Ovary (tissue), 10 donors: ENCODE measurements at regions of chr12 and their contacts with region 1.

Region 1: DNA sequence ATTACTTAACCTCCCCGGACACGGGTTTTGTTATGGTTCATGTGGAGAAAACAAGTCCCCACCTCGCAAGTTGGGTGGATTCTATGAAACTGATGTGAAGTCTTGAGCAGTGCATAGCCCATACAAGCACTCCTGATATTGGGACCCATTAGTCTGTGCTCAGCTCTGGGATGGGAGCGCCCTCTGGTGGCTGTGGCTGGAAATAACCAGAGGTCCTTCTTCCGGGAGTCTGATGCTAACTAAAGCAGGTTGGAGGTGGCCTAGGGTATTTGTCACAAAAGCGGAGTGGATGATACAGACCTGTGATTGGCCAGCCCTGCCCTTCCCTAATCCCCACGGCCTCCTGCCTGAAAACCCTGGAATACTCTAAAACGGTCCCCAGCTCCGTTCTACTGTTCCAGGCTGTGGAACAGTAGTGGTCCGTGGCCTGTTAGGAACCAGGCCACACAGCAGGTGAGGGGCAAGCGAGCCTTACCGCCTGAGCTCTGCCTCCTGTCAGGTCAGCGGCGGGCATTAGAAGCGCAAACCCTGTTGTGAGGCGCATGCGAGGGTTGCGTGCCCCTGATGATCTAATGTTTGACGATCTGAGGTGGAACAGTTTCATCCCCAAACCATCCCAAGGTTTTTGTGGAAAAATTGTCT is 6.4 kb downstream of the SLC48A1 start:
- DNase-seq: peak; percentile 84 to 94 (median 93)
- H3K4me3 ChIP-seq: no peak overlapping the region
- H3K27ac ChIP-seq: peak overlapping the region in 1 of 2 donors; percentile 34
- H3K4me1 ChIP-seq: peaks cover 30% of the 10 kb centered on the region
- H3K27me3 ChIP-seq: no peaks in the 10 kb centered on the region
- CTCF ChIP-seq: peak; percentile 95 to 97 (median 96)
- EP300 ChIP-seq: no peak
- POLR2A ChIP-seq: no peak

Region 2: DNA sequence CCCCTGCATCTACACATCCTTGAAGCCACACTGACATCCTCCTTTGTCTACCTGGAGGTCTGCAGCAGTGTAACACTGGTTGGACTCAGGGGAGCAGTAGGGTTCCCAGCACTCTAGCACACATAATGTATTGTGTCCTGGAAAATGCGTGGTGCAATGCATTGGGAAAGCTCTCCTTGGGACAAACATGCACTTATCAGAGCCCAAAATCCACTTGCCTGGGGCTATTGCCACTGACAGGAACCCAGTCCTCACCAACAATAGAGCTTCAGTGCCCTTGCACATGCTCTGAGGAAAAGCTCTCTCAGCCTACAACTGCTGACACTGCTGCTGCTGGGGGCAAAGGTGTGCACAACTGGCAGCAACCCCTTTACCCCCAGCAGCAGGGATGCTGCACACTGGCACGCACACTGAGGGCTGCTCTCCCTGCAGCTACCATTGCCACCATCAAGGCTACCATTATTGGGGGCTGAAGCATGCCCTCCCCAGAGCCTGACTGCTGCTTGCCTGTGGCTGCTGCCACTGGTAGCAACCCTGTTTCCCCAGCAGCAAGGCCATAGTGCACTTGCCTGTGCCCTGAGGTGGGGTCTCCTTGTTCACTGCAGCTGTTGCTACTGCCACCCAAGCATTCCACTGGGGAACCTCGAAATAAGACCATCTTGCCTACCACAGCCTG is 1175.5 kb before region 1 on chr12:
- intact Hi-C with region 1: no loop called
- DNase-seq: no peak
- H3K4me3 ChIP-seq: no peak overlapping the region
- H3K27ac ChIP-seq: no peak overlapping the region
- H3K4me1 ChIP-seq: peaks cover 3% of the 10 kb centered on the region
- H3K27me3 ChIP-seq: no peaks in the 10 kb centered on the region
- CTCF ChIP-seq: no peak
- EP300 ChIP-seq: no peak
- POLR2A ChIP-seq: no peak

Region 3: GRCh38 chr12:47651368-47652254 is 127.8 kb before region 1 on chr12:
- intact Hi-C with region 1: loop called in 2 of 4 experiments (anchors 5 kb)
- DNase-seq: peak; percentile 45 to 64 (median 58)
- H3K4me3 ChIP-seq: no peak overlapping the region
- H3K27ac ChIP-seq: no peak overlapping the region
- H3K4me1 ChIP-seq: peaks cover 1% of the 10 kb centered on the region
- H3K27me3 ChIP-seq: no peaks in the 10 kb centered on the region
- CTCF ChIP-seq: peak; percentile 55 to 78 (median 73)
- EP300 ChIP-seq: no peak
- POLR2A ChIP-seq: no peak

Region 4: DNA sequence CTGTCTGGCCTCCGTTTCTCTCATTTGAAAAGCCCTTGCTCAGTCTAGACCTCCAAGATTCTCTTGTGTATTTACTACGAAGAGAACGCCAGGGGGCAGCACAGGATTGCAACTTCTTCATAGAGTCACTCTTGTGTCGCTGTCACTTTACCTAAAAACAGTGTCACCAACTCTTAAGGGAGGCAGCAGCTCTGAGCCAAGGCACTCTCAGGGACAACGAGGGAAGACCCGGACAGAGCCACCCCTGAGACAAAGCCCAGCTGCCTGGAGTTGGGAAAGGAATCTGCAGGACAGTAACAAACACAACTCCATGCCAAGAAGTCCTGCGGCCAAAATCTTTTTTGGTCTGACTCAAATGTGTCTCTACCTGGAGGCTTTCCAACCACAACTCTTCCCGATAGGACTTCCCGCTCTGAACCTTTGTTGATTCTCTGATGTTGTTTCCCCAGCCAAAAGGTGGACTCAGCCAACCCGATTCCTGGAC is 64.0 kb before region 1 on chr12:
- intact Hi-C with region 1: loop called (anchors 2 to 5 kb)
- DNase-seq: peak; percentile 81 to 92 (median 83)
- H3K4me3 ChIP-seq: no peak overlapping the region
- H3K27ac ChIP-seq: peak overlapping the region; percentile 60 to 84
- H3K4me1 ChIP-seq: peaks cover 39% of the 10 kb centered on the region
- H3K27me3 ChIP-seq: no peaks in the 10 kb centered on the region
- CTCF ChIP-seq: peak; percentile 60 to 97 (median 89)
- EP300 ChIP-seq: no peak
- POLR2A ChIP-seq: no peak

Region 5: DNA sequence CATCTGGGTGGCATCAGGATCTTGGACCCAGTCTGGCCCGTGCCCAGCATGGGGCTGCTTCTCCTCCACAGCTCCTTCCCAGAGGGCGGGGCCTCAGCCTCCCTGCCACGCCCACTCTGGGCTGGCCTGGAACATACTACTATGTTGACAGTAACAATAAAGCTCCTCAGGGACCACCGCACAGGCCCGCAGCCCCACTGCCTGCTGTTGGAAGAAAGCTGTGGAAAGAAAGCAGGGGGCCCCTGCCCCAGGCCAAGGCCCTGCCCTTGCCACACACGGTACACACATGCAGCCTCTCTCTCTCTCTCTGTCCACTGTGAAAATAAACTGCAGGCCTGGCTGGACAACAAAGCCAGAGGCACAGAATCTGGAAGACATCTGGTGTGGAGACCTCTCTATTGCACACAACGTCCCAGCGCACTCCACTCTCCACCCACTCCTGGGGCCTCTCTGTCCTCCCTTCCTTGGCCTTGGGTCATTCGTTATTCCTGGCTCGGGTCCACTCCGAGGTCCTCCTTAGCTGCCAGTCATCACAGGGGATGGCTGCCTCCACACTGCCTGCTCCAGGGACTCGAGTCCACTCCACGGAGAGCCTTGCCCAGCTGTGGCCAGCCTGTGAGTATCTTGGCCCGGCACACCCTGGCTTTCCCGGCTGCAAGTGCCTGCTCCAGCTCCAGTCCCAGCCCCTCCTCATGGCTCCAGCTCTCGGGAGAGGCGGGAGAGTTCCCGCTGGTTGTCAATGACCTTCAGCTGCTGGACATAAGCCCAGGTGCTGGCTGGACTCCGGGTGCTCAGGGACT is 42.3 kb before region 1 on chr12:
- intact Hi-C with region 1: loop called in 2 of 4 experiments (anchors 5 kb)
- DNase-seq: peak; percentile 94 to 98 (median 96)
- H3K4me3 ChIP-seq: no peak overlapping the region
- H3K27ac ChIP-seq: peak overlapping the region; percentile 68 to 91
- H3K4me1 ChIP-seq: peaks cover 37% of the 10 kb centered on the region
- H3K27me3 ChIP-seq: no peaks in the 10 kb centered on the region
- CTCF ChIP-seq: peak in 1 of 3 donors; percentile 6
- EP300 ChIP-seq: no peak
- POLR2A ChIP-seq: peak; percentile 34

Region 6: DNA sequence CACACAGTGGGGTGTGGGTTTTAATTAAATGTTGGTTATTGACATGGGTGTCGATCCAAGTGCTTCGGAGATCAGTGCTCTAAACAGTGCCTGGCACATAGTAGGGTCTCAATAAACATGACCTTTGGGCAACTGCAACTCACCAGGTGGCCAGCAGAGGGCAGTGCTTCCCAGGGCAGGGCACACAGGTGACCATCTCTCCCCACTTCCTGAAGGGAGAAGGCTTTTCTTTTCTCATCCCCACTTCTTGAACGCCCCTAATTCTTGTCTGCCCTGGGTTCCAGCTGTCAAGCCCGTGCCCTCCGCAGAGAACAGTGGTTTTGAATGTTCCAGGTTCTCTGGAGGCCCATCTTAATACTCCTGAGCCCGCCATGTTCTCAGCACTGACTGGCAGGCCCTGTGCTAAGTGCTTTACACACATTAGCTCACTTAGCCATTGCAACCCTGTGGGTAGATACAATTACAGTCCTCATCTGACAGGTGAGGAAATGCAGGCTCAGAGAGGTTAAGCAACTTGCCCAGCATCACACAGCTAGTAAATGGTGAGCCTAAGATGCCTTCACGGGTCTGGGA is 37.1 kb before region 1 on chr12:
- intact Hi-C with region 1: loop called in 3 of 4 experiments (anchors 2 to 5 kb)
- DNase-seq: peak in 4 of 5 donors; percentile 68 to 77 (median 74)
- H3K4me3 ChIP-seq: no peak overlapping the region
- H3K27ac ChIP-seq: peak overlapping the region in 1 of 2 donors; percentile 51
- H3K4me1 ChIP-seq: peaks cover 12% of the 10 kb centered on the region
- H3K27me3 ChIP-seq: no peaks in the 10 kb centered on the region
- CTCF ChIP-seq: peak; percentile 65 to 95 (median 93)
- EP300 ChIP-seq: no peak
- POLR2A ChIP-seq: no peak